PC-3 (cell line): ENCODE measurements at regions of chr9 and their contacts with region 1.

Region 1: DNA sequence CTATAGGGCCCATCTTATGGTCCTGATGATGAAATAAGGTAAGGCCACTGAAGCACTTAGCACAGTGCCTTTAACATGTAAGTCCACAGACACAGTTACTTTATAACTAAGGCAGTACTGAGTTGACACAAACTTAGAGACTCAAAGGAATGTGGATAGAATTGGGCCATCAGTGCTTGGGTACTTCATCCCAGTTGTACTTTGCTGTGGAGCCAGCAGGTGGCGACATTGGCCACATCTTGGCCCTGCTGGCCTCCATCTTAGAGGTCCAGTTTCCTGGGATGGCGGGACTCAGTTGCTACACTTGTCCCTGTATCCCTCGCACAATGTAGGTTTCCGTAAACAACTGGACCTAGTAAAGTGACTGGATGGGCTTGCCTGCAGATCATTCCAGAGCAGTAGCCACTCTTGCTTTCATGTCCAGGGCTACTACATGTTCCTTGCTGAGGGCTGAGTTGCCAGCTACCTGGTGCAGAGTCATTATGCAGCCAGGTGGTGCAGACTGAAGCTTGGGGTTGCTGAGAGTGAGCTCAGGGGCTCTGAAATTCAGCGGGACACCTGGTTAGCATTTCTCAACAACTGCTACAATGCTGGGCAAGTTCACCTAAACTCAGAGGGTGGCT is 10.6 kb downstream of the MTAP start:
- DNase-seq: peak; percentile 72
- ATAC-seq: peak; percentile 68
- H3K4me3 ChIP-seq: no peak overlapping the region
- H3K27ac ChIP-seq: peak overlapping the region; percentile 57
- H3K4me1 ChIP-seq: peaks cover 28% of the 10 kb centered on the region
- H3K27me3 ChIP-seq: no peaks in the 10 kb centered on the region
- CTCF ChIP-seq: peak; percentile 90

Region 2: DNA sequence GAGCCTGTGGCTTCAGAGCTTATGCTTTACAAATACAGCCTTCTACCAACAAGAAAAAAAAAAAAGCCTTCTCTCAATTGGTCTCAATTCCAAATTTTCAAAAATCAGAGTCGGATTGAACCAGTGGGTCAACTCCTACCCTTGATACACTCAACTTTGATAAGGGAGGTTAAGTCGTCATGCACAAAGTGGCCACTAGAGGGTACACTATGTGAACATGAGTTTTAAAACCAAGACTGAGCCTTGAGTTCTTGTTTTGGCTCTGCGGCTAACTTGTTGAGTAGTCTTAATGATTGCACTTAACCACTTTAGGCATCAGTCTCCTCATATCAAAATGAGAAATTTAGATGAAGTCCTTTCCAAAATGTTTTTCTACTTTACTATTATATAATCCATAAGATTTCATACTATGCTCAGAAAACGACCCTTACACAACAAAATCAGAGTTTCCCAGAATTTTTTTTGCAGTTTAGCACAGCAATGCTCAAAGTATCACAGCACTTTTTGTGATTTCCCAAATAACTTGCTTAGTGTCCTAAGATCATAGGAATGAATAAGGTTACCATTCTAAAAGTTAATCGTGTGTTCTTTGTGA is 103.5 kb before region 1 on chr9:
- CTCF ChIA-PET with region 1: no interaction called
- POLR2A ChIA-PET with region 1: no interaction called
- intact Hi-C with region 1: no loop called
- DNase-seq: peak; percentile 73
- ATAC-seq: no peak
- H3K4me3 ChIP-seq: no peak overlapping the region
- H3K27ac ChIP-seq: no peak overlapping the region
- H3K4me1 ChIP-seq: peaks cover 11% of the 10 kb centered on the region; the same call in 1 of the 2 replicates
- H3K27me3 ChIP-seq: no peaks in the 10 kb centered on the region
- CTCF ChIP-seq: peak; percentile 84

Region 3: GRCh38 chr9:21852754-21853153 is 39.7 kb after region 1 on chr9:
- CTCF ChIA-PET with region 1: no interaction called
- POLR2A ChIA-PET with region 1: no interaction called
- intact Hi-C with region 1: no loop called
- DNase-seq: no peak
- ATAC-seq: no peak
- H3K4me3 ChIP-seq: no peak overlapping the region
- H3K27ac ChIP-seq: no peak overlapping the region
- H3K4me1 ChIP-seq: peaks cover 36% of the 10 kb centered on the region
- H3K27me3 ChIP-seq: no peaks in the 10 kb centered on the region
- CTCF ChIP-seq: no peak

Region 4: GRCh38 chr9:21995177-21996086 is 182.4 kb after region 1 on chr9:
- CTCF ChIA-PET with region 1: no interaction called
- POLR2A ChIA-PET with region 1: no interaction called
- intact Hi-C with region 1: loop called (anchors 1 kb)
- DNase-seq: peak; percentile 63
- ATAC-seq: peak; percentile 53
- H3K4me3 ChIP-seq: peak overlapping the region; percentile 96
- H3K27ac ChIP-seq: peak overlapping the region; percentile 78
- H3K4me1 ChIP-seq: peaks cover 31% of the 10 kb centered on the region
- H3K27me3 ChIP-seq: no peaks in the 10 kb centered on the region
- CTCF ChIP-seq: peak; percentile 36; the same call in 1 of the 2 replicates

Region 5: GRCh38 chr9:22037954-22038690 is 225.1 kb after region 1 on chr9:
- CTCF ChIA-PET with region 1: no interaction called
- POLR2A ChIA-PET with region 1: no interaction called
- intact Hi-C with region 1: loop called (anchors 2 kb)
- DNase-seq: peak; percentile 48
- ATAC-seq: no peak; the same call in 1 of the 2 replicates
- H3K4me3 ChIP-seq: no peak overlapping the region
- H3K27ac ChIP-seq: no peak overlapping the region
- H3K4me1 ChIP-seq: peaks cover 62% of the 10 kb centered on the region
- H3K27me3 ChIP-seq: no peaks in the 10 kb centered on the region
- CTCF ChIP-seq: peak; percentile 44

Region 6: DNA sequence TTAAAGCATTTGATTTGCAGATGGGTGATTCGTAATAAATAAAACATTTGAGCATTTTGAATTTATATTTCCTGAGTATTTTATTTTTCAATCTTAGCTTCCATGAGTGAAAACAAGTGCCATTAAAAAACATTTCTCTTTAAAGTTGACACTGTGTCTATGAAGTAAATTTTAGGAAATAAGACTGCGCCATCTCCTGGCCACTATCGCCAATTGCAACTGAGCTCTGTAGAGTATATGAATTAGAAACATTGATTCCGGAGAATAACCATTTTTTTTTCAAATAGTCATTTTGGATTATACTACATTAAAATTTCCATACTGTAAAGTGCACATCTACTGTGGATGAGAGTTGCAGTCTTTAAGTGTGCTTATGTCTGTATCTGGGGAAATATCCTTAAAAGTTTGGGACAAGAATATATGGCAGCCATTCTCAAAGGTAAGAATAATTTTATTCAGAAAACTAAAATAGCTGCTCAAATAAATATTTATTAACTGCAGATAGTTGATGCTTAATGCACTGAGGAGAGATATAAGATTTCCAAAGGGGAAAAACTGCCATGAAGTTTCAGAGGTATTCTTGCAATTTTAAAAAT is 639.5 kb after region 1 on chr9:
- CTCF ChIA-PET with region 1: no interaction called
- POLR2A ChIA-PET with region 1: no interaction called
- intact Hi-C with region 1: loop called (anchors 2 kb)
- DNase-seq: peak; percentile 67
- ATAC-seq: no peak
- H3K4me3 ChIP-seq: no peak overlapping the region
- H3K27ac ChIP-seq: no peak overlapping the region
- H3K4me1 ChIP-seq: peaks cover 22% of the 10 kb centered on the region
- H3K27me3 ChIP-seq: no peaks in the 10 kb centered on the region
- CTCF ChIP-seq: peak; percentile 82